AG04449 (cell line): ENCODE measurements at regions of chr16 and their contacts with region 1.

Region 1: GRCh38 chr16:70653809-70654771 is 7.7 kb downstream of the IL34 start:
- DNase-seq: no peak
- H3K4me3 ChIP-seq: peak overlapping the region; percentile 43
- CTCF ChIP-seq: peak; percentile 66

Region 2: GRCh38 chr16:70337814-70338213 is 316.3 kb before region 1 on chr16:
- CTCF ChIA-PET with region 1: interaction called, 45 read pairs
- POLR2A ChIA-PET with region 1: no interaction called
- DNase-seq: no peak
- H3K4me3 ChIP-seq: no peak overlapping the region
- CTCF ChIP-seq: no peak

Region 3: GRCh38 chr16:70523076-70523742 is 130.9 kb before region 1 on chr16 and contains the start of gene COG4:
- CTCF ChIA-PET with region 1: interaction called, 126 read pairs
- POLR2A ChIA-PET with region 1: no interaction called
- DNase-seq: no peak
- H3K4me3 ChIP-seq: peak within 1 kb of the TSS; percentile 98
- CTCF ChIP-seq: no peak

Region 4: GRCh38 chr16:70573451-70574121 is 80.5 kb before region 1 on chr16:
- CTCF ChIA-PET with region 1: interaction called, 54 read pairs
- POLR2A ChIA-PET with region 1: interaction called, 3 read pairs
- DNase-seq: peak; percentile 68
- H3K4me3 ChIP-seq: no peak overlapping the region
- CTCF ChIP-seq: no peak

Region 5: GRCh38 chr16:70638814-70639792 is 15.0 kb before region 1 on chr16:
- CTCF ChIA-PET with region 1: interaction called, 48 read pairs
- POLR2A ChIA-PET with region 1: no interaction called
- DNase-seq: no peak
- H3K4me3 ChIP-seq: no peak overlapping the region
- CTCF ChIP-seq: no peak

Region 6: GRCh38 chr16:70726892-70727361 is 72.8 kb after region 1 on chr16:
- CTCF ChIA-PET with region 1: no interaction called
- POLR2A ChIA-PET with region 1: no interaction called
- DNase-seq: no peak
- H3K4me3 ChIP-seq: no peak overlapping the region
- CTCF ChIP-seq: no peak